ENCODE measurements at regions of chr7 and their contacts with region 1.

Region 1: GRCh38 chr7:81499262-81500116 is 270.4 kb downstream of the HGF start:
- DNase-seq: no peak
- H3K4me3 ChIP-seq: no peak overlapping the region
- H3K27ac ChIP-seq: no peak overlapping the region
- H3K4me1 ChIP-seq: peaks cover 5% of the 10 kb centered on the region
- H3K27me3 ChIP-seq: no peaks in the 10 kb centered on the region
- CTCF ChIP-seq: peak in 2 of 3 experiments; percentile 45 to 71

Region 2: GRCh38 chr7:81725812-81726127 is 226.3 kb after region 1 on chr7:
- dilution Hi-C with region 1: loop called (anchors 25 kb)
- DNase-seq: no peak
- H3K4me3 ChIP-seq: no peak overlapping the region
- H3K27ac ChIP-seq: no peak overlapping the region
- H3K4me1 ChIP-seq: no peaks in the 10 kb centered on the region
- H3K27me3 ChIP-seq: no peaks in the 10 kb centered on the region
- CTCF ChIP-seq: no peak

Region 3: DNA sequence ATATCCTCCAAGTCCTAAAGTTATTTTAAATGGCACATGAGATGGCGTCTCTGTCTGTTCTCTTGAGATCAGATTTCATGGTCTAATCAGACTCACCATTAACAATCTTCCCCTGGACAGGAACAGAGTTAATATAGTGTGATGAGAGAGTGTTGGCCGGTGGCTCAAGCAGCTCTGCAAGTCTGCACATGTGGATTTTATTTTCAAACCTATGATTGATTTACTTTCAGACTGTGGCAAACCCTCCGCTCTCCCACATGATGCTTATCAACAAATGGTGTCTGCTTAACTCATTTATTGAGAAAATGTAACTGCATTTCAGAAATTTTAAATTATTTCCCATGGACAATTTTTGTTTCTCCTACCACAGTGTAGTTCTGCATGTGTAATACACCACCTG is 316.8 kb after region 1 on chr7:
- dilution Hi-C with region 1: no loop called
- DNase-seq: no peak
- H3K4me3 ChIP-seq: no peak overlapping the region
- H3K27ac ChIP-seq: no peak overlapping the region
- H3K4me1 ChIP-seq: no peaks in the 10 kb centered on the region
- H3K27me3 ChIP-seq: no peaks in the 10 kb centered on the region
- CTCF ChIP-seq: no peak

Region 4: GRCh38 chr7:82017334-82017943 is 518.0 kb after region 1 on chr7:
- dilution Hi-C with region 1: loop called (anchors 25 kb)
- DNase-seq: no peak
- H3K4me3 ChIP-seq: no peak overlapping the region
- H3K27ac ChIP-seq: no peak overlapping the region
- H3K4me1 ChIP-seq: peaks cover 3% of the 10 kb centered on the region
- H3K27me3 ChIP-seq: no peaks in the 10 kb centered on the region
- CTCF ChIP-seq: peak in 2 of 3 experiments; percentile 31 to 47

Measured in keratinocyte (primary cell).